Heart left ventricle (tissue), 16 donors: ENCODE measurements at regions of chr13 and their contacts with region 1.

Region 1: DNA sequence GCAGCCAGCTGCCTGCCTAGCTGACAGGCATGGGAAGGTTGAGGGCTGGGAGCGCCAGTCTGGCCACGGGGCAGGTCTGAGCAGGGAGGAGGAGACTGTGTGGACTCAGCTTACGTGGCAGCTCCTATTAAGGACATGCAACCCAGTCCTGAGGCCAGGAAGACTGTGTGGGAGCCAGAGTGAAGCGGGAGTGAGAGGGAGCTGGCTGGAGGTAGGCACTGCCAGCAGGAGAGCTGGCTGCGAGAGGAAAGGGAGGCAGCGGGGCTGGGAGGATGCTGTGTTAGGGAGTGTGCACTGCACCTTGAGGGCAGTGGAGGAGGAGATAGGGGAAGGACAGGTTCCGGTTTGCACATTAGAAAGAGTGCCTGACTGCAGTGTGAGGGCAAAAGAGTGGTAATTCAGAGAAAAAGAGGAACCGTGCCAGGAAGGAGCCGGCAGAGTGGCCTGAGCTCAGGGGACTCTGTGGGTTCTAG is 99.2 kb downstream of the SLC7A1 start:
- DNase-seq: peak in 4 of 5 donors; percentile 38 to 82 (median 74)
- ATAC-seq: peak; percentile 74 to 91 (median 82)
- H3K4me3 ChIP-seq: no peak overlapping the region
- H3K27ac ChIP-seq: peak overlapping the region in 3 of 12 donors; percentile 13 to 22 (median 15)
- H3K4me1 ChIP-seq: peaks cover 0 to 22% (median 13%) of the 10 kb centered on the region in 12 donors
- H3K27me3 ChIP-seq: no peaks in the 10 kb centered on the region
- CTCF ChIP-seq: no peak
- POLR2A ChIP-seq: no peak

Region 2: GRCh38 chr13:29454911-29455481 is 41.3 kb before region 1 on chr13:
- intact Hi-C with region 1: no loop called
- DNase-seq: no peak
- ATAC-seq: peak in 3 of 4 donors; percentile 49 to 64 (median 52)
- H3K4me3 ChIP-seq: no peak overlapping the region
- H3K27ac ChIP-seq: peak overlapping the region in 6 of 12 donors; percentile 15 to 62 (median 34)
- H3K4me1 ChIP-seq: peaks cover 0 to 34% (median 6%) of the 10 kb centered on the region in 12 donors
- H3K27me3 ChIP-seq: no peaks in the 10 kb centered on the region
- CTCF ChIP-seq: peak in 9 of 12 donors; percentile 10 to 33 (median 22)
- POLR2A ChIP-seq: no peak

Region 3: GRCh38 chr13:29522044-29522685 is 25.9 kb after region 1 on chr13:
- intact Hi-C with region 1: loop called in 1 of 10 experiments (anchors 2 kb)
- DNase-seq: peak in 1 of 5 donors; percentile 49
- ATAC-seq: peak in 3 of 4 donors; percentile 25 to 63 (median 39)
- H3K4me3 ChIP-seq: no peak overlapping the region
- H3K27ac ChIP-seq: peak overlapping the region in 4 of 12 donors; percentile 17 to 71 (median 34)
- H3K4me1 ChIP-seq: peaks cover 0 to 5% (median 0%) of the 10 kb centered on the region in 12 donors
- H3K27me3 ChIP-seq: no peaks in the 10 kb centered on the region
- CTCF ChIP-seq: no peak
- POLR2A ChIP-seq: no peak

Region 4: DNA sequence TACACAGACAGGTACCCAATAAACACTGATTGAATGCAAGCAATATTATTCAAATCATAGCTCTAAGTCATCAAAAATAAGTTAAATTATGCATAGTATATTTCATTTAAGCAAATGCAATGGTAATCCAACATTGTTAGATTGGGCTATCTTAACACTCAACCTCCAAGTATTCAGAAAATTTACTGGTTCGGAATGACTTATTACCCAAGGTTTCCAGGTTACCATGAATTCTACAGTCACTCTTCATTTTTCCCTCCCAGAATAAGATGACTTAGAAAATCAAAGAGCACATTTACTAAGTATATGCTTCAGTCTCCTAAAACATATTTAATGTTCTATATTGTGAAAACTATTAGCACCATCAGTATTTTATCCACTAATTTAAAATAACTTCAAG is 348.2 kb after region 1 on chr13:
- intact Hi-C with region 1: loop called in 2 of 10 experiments (anchors 5 to 10 kb)
- DNase-seq: no peak
- ATAC-seq: no peak
- H3K4me3 ChIP-seq: no peak overlapping the region
- H3K27ac ChIP-seq: no peak overlapping the region
- H3K4me1 ChIP-seq: peaks cover 0 to 61% (median 31%) of the 10 kb centered on the region in 12 donors
- H3K27me3 ChIP-seq: no peaks in the 10 kb centered on the region
- CTCF ChIP-seq: no peak
- POLR2A ChIP-seq: no peak